ENCODE measurements at regions of chr5 and their contacts with region 1.

Region 1: GRCh38 chr5:82225525-82226172 is 52.5 kb downstream of the RPS23 start:
- DNase-seq: peak; percentile 30 to 63 (median 57)
- ATAC-seq: peak; percentile 90
- H3K4me3 ChIP-seq: no peak overlapping the region
- H3K4me3 Mint-ChIP-seq: peak overlapping the region in 2 of 10 donors; percentile 23 to 33
- H3K27ac ChIP-seq: no peak overlapping the region
- H3K27ac Mint-ChIP-seq: no peak overlapping the region
- H3K4me1 ChIP-seq: no peaks in the 10 kb centered on the region
- H3K4me1 Mint-ChIP-seq: peaks cover 0 to 11% (median 4%) of the 10 kb centered on the region in 7 donors
- H3K27me3 ChIP-seq: no peaks in the 10 kb centered on the region
- H3K27me3 Mint-ChIP-seq: no peaks in the 10 kb centered on the region

Region 2: DNA sequence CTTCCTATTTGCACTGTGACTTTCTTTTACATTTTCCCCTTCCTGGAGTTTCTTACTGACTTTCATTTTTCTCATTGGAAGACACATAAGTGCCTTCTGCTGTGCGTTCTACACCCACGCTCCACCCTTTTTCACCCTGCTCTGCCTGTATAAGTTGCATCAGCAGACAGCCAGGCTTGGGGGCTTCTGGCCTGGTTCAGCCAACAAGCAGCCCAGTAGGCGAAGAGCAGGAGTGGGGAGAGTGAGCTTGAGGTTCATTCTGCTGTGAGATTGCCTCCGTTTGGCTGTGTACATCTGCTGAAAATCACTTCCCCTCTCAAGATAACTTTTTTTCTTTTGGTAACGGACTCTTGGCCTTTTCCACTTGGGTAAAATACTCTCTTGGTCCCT is 1227.1 kb before region 1 on chr5:
- CTCF ChIA-PET with region 1: no interaction called
- POLR2A ChIA-PET with region 1: no interaction called
- intact Hi-C with region 1: no loop called
- DNase-seq: peak in 2 of 9 donors; percentile 20 to 40
- ATAC-seq: peak; percentile 18
- H3K4me3 ChIP-seq: peak overlapping the region; percentile 62
- H3K4me3 Mint-ChIP-seq: peak overlapping the region; percentile 69 to 87 (median 86)
- H3K27ac ChIP-seq: peak overlapping the region; percentile 74
- H3K27ac Mint-ChIP-seq: peak overlapping the region; percentile 74 to 99 (median 93)
- H3K4me1 ChIP-seq: peaks cover 0 to 47% of the 10 kb centered on the region in 2 donors
- H3K4me1 Mint-ChIP-seq: peaks cover 22 to 94% (median 78%) of the 10 kb centered on the region in 7 donors
- H3K27me3 ChIP-seq: no peaks in the 10 kb centered on the region
- H3K27me3 Mint-ChIP-seq: no peaks in the 10 kb centered on the region

Region 3: DNA sequence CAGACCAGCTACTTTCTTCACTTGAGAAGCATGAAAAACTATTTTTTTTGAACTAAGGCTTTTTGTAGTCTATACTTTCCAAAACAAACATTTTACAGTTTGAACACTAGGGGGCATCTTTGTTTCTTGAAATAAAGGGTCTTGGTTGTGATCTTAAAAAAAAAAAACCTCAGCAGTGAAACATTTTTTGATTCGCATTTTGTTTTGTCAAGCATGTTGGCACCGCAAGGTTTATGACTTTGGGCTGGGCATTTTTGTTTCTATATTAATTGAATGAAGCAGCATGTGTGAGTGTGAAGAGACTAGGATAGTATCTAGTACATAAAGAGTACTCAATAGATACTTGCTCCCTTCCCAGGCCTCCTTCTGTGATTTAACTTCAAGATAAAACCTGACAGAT is 800.1 kb before region 1 on chr5:
- CTCF ChIA-PET with region 1: interaction called, 5 read pairs
- POLR2A ChIA-PET with region 1: interaction called, 3 read pairs
- intact Hi-C with region 1: loop called (anchors 1 kb)
- DNase-seq: peak in 7 of 9 donors; percentile 15 to 72 (median 58)
- ATAC-seq: peak; percentile 73
- H3K4me3 ChIP-seq: no peak overlapping the region
- H3K4me3 Mint-ChIP-seq: peak overlapping the region in 2 of 10 donors; percentile 6 to 8
- H3K27ac ChIP-seq: no peak overlapping the region
- H3K27ac Mint-ChIP-seq: peak overlapping the region in 6 of 9 donors; percentile 9 to 65 (median 48)
- H3K4me1 ChIP-seq: peaks cover 0 to 6% of the 10 kb centered on the region in 2 donors
- H3K4me1 Mint-ChIP-seq: peaks cover 3 to 25% (median 13%) of the 10 kb centered on the region in 7 donors
- H3K27me3 ChIP-seq: no peaks in the 10 kb centered on the region
- H3K27me3 Mint-ChIP-seq: no peaks in the 10 kb centered on the region

Region 4: DNA sequence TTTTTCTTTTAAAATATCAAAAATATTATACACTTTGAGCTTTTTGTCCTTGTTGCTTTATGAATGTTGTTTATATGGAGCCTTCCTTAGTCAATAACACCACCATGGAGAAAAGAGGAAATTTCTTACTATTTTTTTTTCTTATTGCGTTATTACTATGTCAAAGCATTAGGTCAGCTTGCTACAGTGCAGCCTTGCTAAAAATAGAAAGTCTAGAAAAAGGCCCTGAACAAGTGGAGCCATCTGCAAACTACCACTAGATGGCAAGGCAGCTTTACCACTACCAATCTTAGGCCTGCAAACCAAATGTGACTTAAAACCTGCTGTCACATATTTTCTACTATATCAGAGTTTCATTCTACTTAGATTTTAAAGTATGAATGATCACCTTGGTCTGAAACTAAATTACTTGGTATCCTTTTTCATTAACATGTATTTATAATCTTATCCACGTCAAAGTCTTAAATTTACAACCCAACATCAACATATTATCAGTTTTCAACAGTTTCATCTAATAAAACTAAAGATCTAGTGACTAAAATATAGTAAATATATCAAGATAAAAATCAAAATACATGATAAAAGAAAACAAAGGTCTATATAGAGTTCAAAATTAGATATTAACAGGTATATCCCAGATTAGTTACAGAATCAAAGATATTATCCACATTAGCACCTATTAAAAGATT is 718.6 kb before region 1 on chr5:
- CTCF ChIA-PET with region 1: interaction called, 5 read pairs
- POLR2A ChIA-PET with region 1: no interaction called
- intact Hi-C with region 1: loop called (anchors 1 kb)
- DNase-seq: peak in 7 of 9 donors; percentile 34 to 66 (median 55)
- ATAC-seq: peak; percentile 96
- H3K4me3 ChIP-seq: no peak overlapping the region
- H3K4me3 Mint-ChIP-seq: no peak overlapping the region
- H3K27ac ChIP-seq: no peak overlapping the region
- H3K27ac Mint-ChIP-seq: no peak overlapping the region
- H3K4me1 ChIP-seq: no peaks in the 10 kb centered on the region
- H3K4me1 Mint-ChIP-seq: peaks cover 0 to 27% (median 8%) of the 10 kb centered on the region in 7 donors
- H3K27me3 ChIP-seq: no peaks in the 10 kb centered on the region
- H3K27me3 Mint-ChIP-seq: no peaks in the 10 kb centered on the region

Region 5: GRCh38 chr5:81513982-81514381 is 711.7 kb before region 1 on chr5:
- CTCF ChIA-PET with region 1: interaction called, 5 read pairs
- POLR2A ChIA-PET with region 1: no interaction called
- intact Hi-C with region 1: loop called in 1 of 2 experiments (anchors 2 kb)
- DNase-seq: peak in 4 of 9 donors; percentile 20 to 32 (median 22)
- ATAC-seq: peak; percentile 55
- H3K4me3 ChIP-seq: no peak overlapping the region
- H3K4me3 Mint-ChIP-seq: no peak overlapping the region
- H3K27ac ChIP-seq: no peak overlapping the region
- H3K27ac Mint-ChIP-seq: peak overlapping the region in 2 of 9 donors; percentile 8 to 18
- H3K4me1 ChIP-seq: no peaks in the 10 kb centered on the region
- H3K4me1 Mint-ChIP-seq: peaks cover 0 to 24% (median 6%) of the 10 kb centered on the region in 7 donors
- H3K27me3 ChIP-seq: no peaks in the 10 kb centered on the region
- H3K27me3 Mint-ChIP-seq: no peaks in the 10 kb centered on the region

Region 6: DNA sequence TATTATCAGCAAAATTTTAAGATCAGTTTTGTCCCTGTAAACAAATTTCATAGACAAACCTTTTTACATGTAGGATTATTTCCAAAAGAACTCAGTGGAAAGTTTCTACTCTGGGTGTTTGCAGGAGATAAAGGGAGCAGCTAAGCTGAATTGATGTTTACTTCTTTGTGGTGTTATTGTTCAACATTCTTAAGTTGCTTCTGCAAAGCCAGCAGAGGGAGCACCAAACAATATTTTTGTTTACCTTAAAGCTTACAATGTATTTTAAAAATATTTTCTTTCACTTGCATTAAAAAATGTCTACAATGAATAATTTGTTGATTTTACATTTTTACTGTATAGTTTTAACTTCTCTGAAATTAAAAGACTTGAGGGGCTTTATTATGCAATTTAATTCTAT is 118.4 kb before region 1 on chr5:
- CTCF ChIA-PET with region 1: no interaction called
- POLR2A ChIA-PET with region 1: no interaction called
- intact Hi-C with region 1: loop called in 1 of 2 experiments (anchors 5 kb)
- DNase-seq: no peak
- ATAC-seq: no peak
- H3K4me3 ChIP-seq: no peak overlapping the region
- H3K4me3 Mint-ChIP-seq: no peak overlapping the region
- H3K27ac ChIP-seq: no peak overlapping the region
- H3K27ac Mint-ChIP-seq: no peak overlapping the region
- H3K4me1 ChIP-seq: peaks cover 0 to 3% of the 10 kb centered on the region in 2 donors
- H3K4me1 Mint-ChIP-seq: peaks cover 2 to 38% (median 18%) of the 10 kb centered on the region in 7 donors
- H3K27me3 ChIP-seq: no peaks in the 10 kb centered on the region
- H3K27me3 Mint-ChIP-seq: no peaks in the 10 kb centered on the region

Region 7: GRCh38 chr5:82174128-82174918 is 51.3 kb before region 1 on chr5:
- CTCF ChIA-PET with region 1: no interaction called
- POLR2A ChIA-PET with region 1: no interaction called
- intact Hi-C with region 1: loop called (anchors 1 to 2 kb)
- DNase-seq: peak; percentile 10 to 44 (median 35)
- ATAC-seq: peak; percentile 86
- H3K4me3 ChIP-seq: no peak overlapping the region
- H3K4me3 Mint-ChIP-seq: no peak overlapping the region
- H3K27ac ChIP-seq: no peak overlapping the region
- H3K27ac Mint-ChIP-seq: peak overlapping the region in 1 of 9 donors; percentile 6
- H3K4me1 ChIP-seq: no peaks in the 10 kb centered on the region
- H3K4me1 Mint-ChIP-seq: peaks cover 0 to 8% (median 0%) of the 10 kb centered on the region in 7 donors
- H3K27me3 ChIP-seq: no peaks in the 10 kb centered on the region
- H3K27me3 Mint-ChIP-seq: no peaks in the 10 kb centered on the region

Measured in naive thymus-derived CD4-positive, alpha-beta T cell (primary cell).